B cell (primary cell): ENCODE measurements at regions of chr3 and their contacts with region 1.

Region 1: GRCh38 chr3:4493014-4493940 is at the start of gene ITPR1:
- DNase-seq: peak; percentile 98
- ATAC-seq: peak; percentile 88
- H3K4me3 ChIP-seq: peak within 1 kb of the TSS; percentile 90 to 98 (median 92)
- H3K4me3 Mint-ChIP-seq: peak within 1 kb of the TSS; percentile 96
- H3K27ac ChIP-seq: peak within 1 kb of the TSS; percentile 86 to 89
- H3K27ac Mint-ChIP-seq: peak within 1 kb of the TSS; percentile 95
- H3K4me1 ChIP-seq: peaks cover 34 to 39% of the 10 kb centered on the region in 2 donors
- H3K4me1 Mint-ChIP-seq: peaks cover 48% of the 10 kb centered on the region
- H3K27me3 ChIP-seq: no peaks in the 10 kb centered on the region
- H3K27me3 Mint-ChIP-seq: no peaks in the 10 kb centered on the region
- CTCF ChIP-seq: no peak
- total RNA-seq, gene ITPR1: 332 and 357 TPM in 2 replicates

Region 2: GRCh38 chr3:3705090-3705775 is 788.0 kb before region 1 on chr3:
- CTCF ChIA-PET with region 1: no interaction called
- POLR2A ChIA-PET with region 1: no interaction called
- intact Hi-C with region 1: no loop called
- DNase-seq: no peak
- ATAC-seq: no peak
- H3K4me3 ChIP-seq: no peak overlapping the region
- H3K4me3 Mint-ChIP-seq: no peak overlapping the region
- H3K27ac ChIP-seq: no peak overlapping the region
- H3K27ac Mint-ChIP-seq: no peak overlapping the region
- H3K4me1 ChIP-seq: no peaks in the 10 kb centered on the region
- H3K4me1 Mint-ChIP-seq: no peaks in the 10 kb centered on the region
- H3K27me3 ChIP-seq: no peaks in the 10 kb centered on the region
- H3K27me3 Mint-ChIP-seq: no peaks in the 10 kb centered on the region
- CTCF ChIP-seq: no peak

Region 3: GRCh38 chr3:4065085-4065484 is 428.2 kb before region 1 on chr3:
- CTCF ChIA-PET with region 1: no interaction called
- POLR2A ChIA-PET with region 1: no interaction called
- intact Hi-C with region 1: loop called (anchors 5 kb)
- DNase-seq: peak; percentile 84
- ATAC-seq: peak; percentile 87
- H3K4me3 ChIP-seq: peak overlapping the region in 1 of 5 experiments; percentile 8
- H3K4me3 Mint-ChIP-seq: peak overlapping the region; percentile 33
- H3K27ac ChIP-seq: no peak overlapping the region
- H3K27ac Mint-ChIP-seq: peak overlapping the region; percentile 79
- H3K4me1 ChIP-seq: peaks cover 84 to 87% of the 10 kb centered on the region in 2 donors
- H3K4me1 Mint-ChIP-seq: peaks cover 89% of the 10 kb centered on the region
- H3K27me3 ChIP-seq: no peaks in the 10 kb centered on the region
- H3K27me3 Mint-ChIP-seq: no peaks in the 10 kb centered on the region
- CTCF ChIP-seq: no peak

Region 4: DNA sequence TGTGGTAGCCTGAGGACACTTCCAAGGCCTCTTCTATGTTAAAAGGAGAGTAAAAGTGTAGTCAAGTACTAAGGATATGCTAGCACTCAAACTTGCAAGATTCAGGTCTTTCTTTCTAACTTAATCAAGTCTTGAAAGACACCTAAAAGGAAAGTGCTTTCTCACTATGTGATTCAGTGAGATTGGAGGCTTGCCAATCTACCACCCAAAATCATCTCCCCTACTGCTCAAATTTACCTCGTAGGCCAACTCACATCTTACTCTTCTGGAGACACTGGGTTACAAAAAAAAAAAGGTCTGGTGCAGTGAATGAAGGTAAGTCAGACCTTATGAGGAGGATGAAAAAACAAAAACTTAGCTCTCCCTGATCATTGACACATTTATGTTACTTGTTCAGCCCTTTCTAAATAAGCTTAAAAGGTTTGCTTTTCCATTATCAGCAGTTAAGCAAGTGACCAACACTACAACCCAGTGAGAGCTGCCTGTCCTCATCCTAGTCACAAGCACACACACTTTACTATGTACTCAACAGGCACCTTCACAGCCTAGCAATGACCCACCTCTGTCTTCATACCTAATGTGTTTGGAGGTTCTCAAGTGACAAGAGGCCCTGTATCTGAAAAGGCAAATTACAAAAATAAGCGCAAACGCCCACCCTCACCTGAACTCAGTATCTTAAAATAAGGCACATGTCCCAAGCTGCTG is 45.8 kb before region 1 on chr3:
- CTCF ChIA-PET with region 1: no interaction called
- POLR2A ChIA-PET with region 1: interaction called, 12 read pairs
- intact Hi-C with region 1: no loop called
- DNase-seq: no peak
- ATAC-seq: no peak
- H3K4me3 ChIP-seq: no peak overlapping the region
- H3K4me3 Mint-ChIP-seq: no peak overlapping the region
- H3K27ac ChIP-seq: no peak overlapping the region
- H3K27ac Mint-ChIP-seq: no peak overlapping the region
- H3K4me1 ChIP-seq: no peaks in the 10 kb centered on the region
- H3K4me1 Mint-ChIP-seq: no peaks in the 10 kb centered on the region
- H3K27me3 ChIP-seq: no peaks in the 10 kb centered on the region
- H3K27me3 Mint-ChIP-seq: no peaks in the 10 kb centered on the region
- CTCF ChIP-seq: no peak

Region 5: GRCh38 chr3:4504340-4505261 is 11.3 kb after region 1 on chr3:
- CTCF ChIA-PET with region 1: interaction called, 66 read pairs
- POLR2A ChIA-PET with region 1: interaction called, 96 read pairs
- intact Hi-C with region 1: loop called (anchors 1 kb)
- DNase-seq: peak; percentile 63
- ATAC-seq: no peak
- H3K4me3 ChIP-seq: peak overlapping the region; percentile 24 to 59 (median 44)
- H3K4me3 Mint-ChIP-seq: peak overlapping the region; percentile 85
- H3K27ac ChIP-seq: peak overlapping the region; percentile 81 to 98
- H3K27ac Mint-ChIP-seq: peak overlapping the region; percentile 93
- H3K4me1 ChIP-seq: peaks cover 80 to 87% of the 10 kb centered on the region in 2 donors
- H3K4me1 Mint-ChIP-seq: peaks cover 88% of the 10 kb centered on the region
- H3K27me3 ChIP-seq: no peaks in the 10 kb centered on the region
- H3K27me3 Mint-ChIP-seq: no peaks in the 10 kb centered on the region
- CTCF ChIP-seq: no peak

Region 6: DNA sequence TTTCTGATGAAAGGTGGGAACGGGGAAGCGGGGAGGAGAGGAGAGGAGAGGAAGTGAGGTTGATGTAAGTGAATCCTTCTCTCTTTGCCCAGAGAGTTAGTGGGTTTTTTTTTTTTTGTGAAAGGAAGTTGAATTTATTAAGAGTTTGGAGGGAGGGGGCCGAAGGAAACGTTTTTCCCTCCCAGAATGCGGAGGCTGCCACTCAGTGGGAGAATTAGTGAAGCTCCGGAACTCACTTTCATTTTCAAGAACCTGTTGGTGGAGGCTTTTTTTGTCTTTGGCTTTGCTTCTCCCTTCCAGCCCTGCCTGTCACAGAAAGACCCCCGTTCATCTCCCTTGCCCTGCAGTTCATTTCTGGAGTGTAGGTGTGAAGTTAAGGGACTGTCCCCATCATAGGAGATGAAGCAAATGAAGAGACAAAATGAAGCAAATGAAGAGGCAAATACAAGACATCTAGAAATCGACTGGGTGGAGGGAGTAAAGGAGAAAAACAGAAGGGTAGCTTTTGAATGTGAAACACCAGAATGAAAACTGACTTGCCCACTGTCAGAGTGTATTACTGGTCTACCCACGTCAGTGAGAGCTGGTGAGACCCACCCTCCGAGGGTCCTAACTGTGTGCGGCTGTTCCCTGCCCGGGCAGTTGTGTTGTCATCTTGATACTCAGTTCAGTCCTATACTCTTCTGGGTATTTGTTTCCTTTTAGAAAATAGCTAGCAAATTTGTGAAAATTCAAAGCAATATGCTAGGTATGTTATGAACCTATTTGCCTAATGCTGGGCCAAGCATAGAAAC is 91.4 kb after region 1 on chr3:
- CTCF ChIA-PET with region 1: interaction called, 6 read pairs
- POLR2A ChIA-PET with region 1: interaction called, 7 read pairs
- intact Hi-C with region 1: loop called (anchors 5 kb)
- DNase-seq: peak; percentile 23
- ATAC-seq: peak; percentile 43
- H3K4me3 ChIP-seq: peak overlapping the region in 4 of 5 experiments; percentile 0 to 31 (median 14)
- H3K4me3 Mint-ChIP-seq: peak overlapping the region; percentile 87
- H3K27ac ChIP-seq: peak overlapping the region; percentile 28 to 56
- H3K27ac Mint-ChIP-seq: peak overlapping the region; percentile 88
- H3K4me1 ChIP-seq: peaks cover 60 to 68% of the 10 kb centered on the region in 2 donors
- H3K4me1 Mint-ChIP-seq: peaks cover 88% of the 10 kb centered on the region
- H3K27me3 ChIP-seq: no peaks in the 10 kb centered on the region
- H3K27me3 Mint-ChIP-seq: no peaks in the 10 kb centered on the region
- CTCF ChIP-seq: no peak

Region 7: GRCh38 chr3:4776980-4777581 is 283.8 kb after region 1 on chr3:
- CTCF ChIA-PET with region 1: no interaction called
- POLR2A ChIA-PET with region 1: no interaction called
- intact Hi-C with region 1: no loop called
- DNase-seq: no peak
- ATAC-seq: no peak
- H3K4me3 ChIP-seq: no peak overlapping the region
- H3K4me3 Mint-ChIP-seq: no peak overlapping the region
- H3K27ac ChIP-seq: no peak overlapping the region
- H3K27ac Mint-ChIP-seq: peak overlapping the region; percentile 51
- H3K4me1 ChIP-seq: no peaks in the 10 kb centered on the region
- H3K4me1 Mint-ChIP-seq: no peaks in the 10 kb centered on the region
- H3K27me3 ChIP-seq: no peaks in the 10 kb centered on the region
- H3K27me3 Mint-ChIP-seq: no peaks in the 10 kb centered on the region
- CTCF ChIP-seq: no peak

Region 8: DNA sequence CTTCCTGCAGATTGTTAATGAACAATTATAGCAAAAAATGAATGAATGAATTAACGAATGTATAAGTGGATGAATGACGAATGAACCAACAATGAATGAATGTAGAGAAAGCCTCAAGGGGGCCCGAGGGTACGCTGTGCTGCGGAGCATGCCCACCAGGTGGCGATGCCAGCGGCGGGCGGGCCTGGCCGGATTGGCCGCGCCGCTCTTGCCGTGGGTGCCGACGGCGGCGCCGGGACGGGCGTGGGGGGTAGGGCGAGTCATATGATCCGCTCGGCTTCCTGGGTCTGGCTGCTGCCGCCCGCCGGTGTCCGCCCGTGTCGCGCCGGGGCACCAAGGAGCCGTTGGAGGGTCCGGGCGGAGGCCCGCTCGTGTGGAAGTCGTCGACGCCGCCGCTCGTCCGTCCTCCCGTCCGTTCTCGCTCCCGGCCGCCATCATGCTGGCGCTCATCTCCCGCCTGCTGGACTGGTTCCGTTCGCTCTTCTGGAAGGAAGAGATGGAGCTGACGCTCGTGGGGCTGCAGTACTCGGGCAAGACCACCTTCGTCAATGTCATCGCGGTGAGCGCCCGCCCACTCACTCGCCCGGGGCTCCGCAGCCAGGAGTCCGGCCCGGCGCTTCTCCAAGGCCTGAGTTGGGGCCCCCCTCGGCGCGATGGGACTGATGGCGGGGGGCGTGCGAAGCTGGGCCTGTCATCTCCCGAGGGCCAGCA is 628.9 kb after region 1 on chr3 and contains the start of gene ARL8B:
- CTCF ChIA-PET with region 1: no interaction called
- POLR2A ChIA-PET with region 1: no interaction called
- intact Hi-C with region 1: loop called (anchors 1 kb)
- DNase-seq: peak; percentile 93
- ATAC-seq: peak; percentile 97
- H3K4me3 ChIP-seq: peak within 1 kb of the TSS; percentile 83 to 100 (median 97)
- H3K4me3 Mint-ChIP-seq: peak within 1 kb of the TSS; percentile 95
- H3K27ac ChIP-seq: peak within 1 kb of the TSS; percentile 88 to 95
- H3K27ac Mint-ChIP-seq: peak within 1 kb of the TSS; percentile 91
- H3K4me1 ChIP-seq: peaks cover 25 to 29% of the 10 kb centered on the region in 2 donors
- H3K4me1 Mint-ChIP-seq: peaks cover 37% of the 10 kb centered on the region
- H3K27me3 ChIP-seq: no peaks in the 10 kb centered on the region
- H3K27me3 Mint-ChIP-seq: no peaks in the 10 kb centered on the region
- CTCF ChIP-seq: peak; percentile 97
- total RNA-seq, gene ARL8B: 66.4 and 67.3 TPM in 2 replicates